ENCODE measurements at regions of chr14 and their contacts with region 1.

Region 1: GRCh38 chr14:89416002-89416995 is 734 bp downstream of the FOXN3 start:
- DNase-seq: peak; percentile 98
- H3K4me3 Mint-ChIP-seq: peak overlapping the region; percentile 88
- H3K27ac Mint-ChIP-seq: peak overlapping the region; percentile 84
- H3K4me1 Mint-ChIP-seq: peaks cover 48% of the 10 kb centered on the region
- H3K27me3 Mint-ChIP-seq: no peaks in the 10 kb centered on the region

Region 2: GRCh38 chr14:88632512-88632911 is 783.8 kb before region 1 on chr14:
- intact Hi-C with region 1: no loop called
- DNase-seq: no peak
- H3K4me3 Mint-ChIP-seq: no peak overlapping the region
- H3K27ac Mint-ChIP-seq: no peak overlapping the region
- H3K4me1 Mint-ChIP-seq: no peaks in the 10 kb centered on the region
- H3K27me3 Mint-ChIP-seq: no peaks in the 10 kb centered on the region

Region 3: GRCh38 chr14:89040460-89041259 is 375.6 kb before region 1 on chr14:
- intact Hi-C with region 1: loop called (anchors 1 kb)
- DNase-seq: peak; percentile 63
- H3K4me3 Mint-ChIP-seq: peak overlapping the region; percentile 56
- H3K27ac Mint-ChIP-seq: no peak overlapping the region
- H3K4me1 Mint-ChIP-seq: no peaks in the 10 kb centered on the region
- H3K27me3 Mint-ChIP-seq: peaks cover 18% of the 10 kb centered on the region

Region 4: DNA sequence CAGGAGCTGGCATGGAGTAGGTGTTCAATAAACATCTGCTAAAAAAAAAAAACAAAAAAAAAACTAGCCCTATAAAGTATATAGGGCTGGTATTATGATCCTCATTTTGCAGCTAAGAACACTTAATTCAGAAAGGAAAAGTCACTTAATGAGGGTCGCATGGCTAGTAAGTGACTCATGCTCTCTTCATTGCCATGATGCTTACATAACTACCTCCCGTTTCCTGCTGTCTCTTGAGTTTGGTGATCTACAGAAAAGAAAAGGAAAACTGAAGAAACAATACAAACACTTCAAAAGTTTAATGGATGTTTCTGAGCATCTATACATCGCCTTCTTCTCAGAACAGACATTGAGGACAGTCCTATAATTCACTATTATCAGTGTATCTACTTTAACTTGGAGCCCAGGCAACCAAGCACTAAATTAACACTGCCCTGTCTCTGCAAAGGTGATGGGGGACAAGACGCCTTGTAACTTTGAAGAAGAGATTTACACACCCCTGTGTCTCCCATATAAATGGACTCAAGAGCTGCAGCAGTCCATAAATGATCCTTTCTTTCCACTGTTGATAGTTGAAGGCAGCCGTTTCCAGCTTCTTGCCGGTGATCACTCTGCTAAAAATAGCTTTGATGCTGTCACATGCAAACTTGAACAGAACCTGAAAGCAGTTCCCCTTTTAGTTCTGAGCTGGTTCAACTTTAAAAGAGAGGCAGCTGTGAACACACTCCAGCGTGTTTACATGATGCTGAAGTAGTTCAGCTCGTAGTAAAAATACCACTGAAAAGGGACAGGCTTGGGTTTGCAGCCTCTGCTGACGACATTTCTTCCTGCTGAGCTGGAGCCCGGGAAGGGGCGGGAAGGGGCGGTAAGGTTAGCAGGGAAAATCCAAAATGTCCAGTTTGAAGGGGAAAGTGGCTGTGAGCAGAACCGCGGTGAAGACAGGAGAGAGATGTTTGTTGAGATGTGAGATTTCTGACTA is 112.6 kb before region 1 on chr14:
- intact Hi-C with region 1: loop called (anchors 1 kb)
- DNase-seq: peak; percentile 25
- H3K4me3 Mint-ChIP-seq: peak overlapping the region; percentile 76
- H3K27ac Mint-ChIP-seq: peak overlapping the region; percentile 87
- H3K4me1 Mint-ChIP-seq: peaks cover 57% of the 10 kb centered on the region
- H3K27me3 Mint-ChIP-seq: no peaks in the 10 kb centered on the region

Region 5: GRCh38 chr14:89336338-89336737 is 80.0 kb before region 1 on chr14:
- intact Hi-C with region 1: no loop called
- DNase-seq: no peak
- H3K4me3 Mint-ChIP-seq: no peak overlapping the region
- H3K27ac Mint-ChIP-seq: no peak overlapping the region
- H3K4me1 Mint-ChIP-seq: peaks cover 28% of the 10 kb centered on the region
- H3K27me3 Mint-ChIP-seq: no peaks in the 10 kb centered on the region

Region 6: GRCh38 chr14:89430391-89431236 is 14.3 kb after region 1 on chr14:
- intact Hi-C with region 1: loop called (anchors 1 kb)
- DNase-seq: peak; percentile 42
- H3K4me3 Mint-ChIP-seq: peak overlapping the region; percentile 79
- H3K27ac Mint-ChIP-seq: peak overlapping the region; percentile 85
- H3K4me1 Mint-ChIP-seq: peaks cover 56% of the 10 kb centered on the region
- H3K27me3 Mint-ChIP-seq: no peaks in the 10 kb centered on the region

Region 7: DNA sequence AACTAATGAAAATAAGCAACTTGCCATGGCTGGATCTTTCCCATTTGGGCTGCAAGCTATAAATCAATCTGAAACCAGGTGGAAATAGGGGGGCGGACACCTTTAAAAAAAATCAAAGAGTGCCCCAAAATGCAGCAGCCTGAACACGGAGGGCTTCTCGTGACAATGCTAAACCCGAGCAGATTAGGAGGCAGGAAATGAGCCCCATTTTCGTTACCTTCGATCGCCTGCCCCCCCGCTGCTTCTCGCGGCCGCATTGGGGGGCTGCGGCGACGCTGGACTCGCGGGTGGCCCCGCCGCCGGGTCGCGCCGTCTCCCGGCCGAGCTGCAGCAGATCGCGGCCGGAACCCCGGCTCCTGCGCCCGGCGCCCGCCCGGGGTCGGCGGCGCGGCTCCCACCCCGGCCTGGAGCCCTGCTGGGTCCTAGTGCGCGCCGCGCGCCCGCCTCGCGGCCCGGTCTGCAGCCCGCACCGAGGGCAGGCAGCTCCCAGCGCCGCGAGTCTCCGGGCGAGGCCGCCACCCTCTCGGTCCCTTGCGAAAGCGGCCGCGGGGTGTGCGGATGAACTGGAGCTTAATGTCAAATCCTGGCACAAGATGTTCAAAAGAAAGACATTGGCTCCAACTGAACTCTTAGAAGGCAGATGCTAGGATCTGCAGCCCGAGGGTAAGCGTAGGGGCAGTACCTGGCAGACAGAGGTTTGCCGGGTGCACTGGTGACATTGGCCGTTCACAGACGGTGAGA is 202.7 kb after region 1 on chr14:
- intact Hi-C with region 1: loop called (anchors 1 kb)
- DNase-seq: peak; percentile 69
- H3K4me3 Mint-ChIP-seq: peak overlapping the region; percentile 95
- H3K27ac Mint-ChIP-seq: peak overlapping the region; percentile 99
- H3K4me1 Mint-ChIP-seq: peaks cover 72% of the 10 kb centered on the region
- H3K27me3 Mint-ChIP-seq: no peaks in the 10 kb centered on the region

Region 8: DNA sequence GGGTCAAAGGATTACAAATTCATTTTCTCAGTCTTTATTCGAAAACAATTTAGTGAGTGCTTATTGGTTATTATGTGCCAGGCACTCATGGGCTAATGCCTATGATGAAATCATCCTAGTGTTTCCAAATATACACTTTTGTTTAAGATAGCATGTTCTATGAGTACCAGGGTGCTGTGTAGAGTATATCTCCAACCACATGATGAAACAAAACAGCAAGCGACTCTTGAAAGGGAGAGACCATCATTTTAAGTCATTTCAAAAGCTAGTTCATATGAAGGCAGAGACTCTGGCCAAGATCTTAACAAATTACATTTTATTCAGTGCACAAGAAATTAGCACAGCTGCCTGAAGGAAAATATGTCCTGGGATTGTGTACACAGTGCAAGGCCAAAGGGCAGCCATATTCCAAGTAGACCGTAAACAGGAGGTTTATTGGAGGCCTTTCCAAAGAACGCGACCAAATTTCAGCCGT is 334.0 kb after region 1 on chr14:
- intact Hi-C with region 1: loop called (anchors 2 kb)
- DNase-seq: no peak
- H3K4me3 Mint-ChIP-seq: no peak overlapping the region
- H3K27ac Mint-ChIP-seq: no peak overlapping the region
- H3K4me1 Mint-ChIP-seq: peaks cover 23% of the 10 kb centered on the region
- H3K27me3 Mint-ChIP-seq: no peaks in the 10 kb centered on the region

Region 9: DNA sequence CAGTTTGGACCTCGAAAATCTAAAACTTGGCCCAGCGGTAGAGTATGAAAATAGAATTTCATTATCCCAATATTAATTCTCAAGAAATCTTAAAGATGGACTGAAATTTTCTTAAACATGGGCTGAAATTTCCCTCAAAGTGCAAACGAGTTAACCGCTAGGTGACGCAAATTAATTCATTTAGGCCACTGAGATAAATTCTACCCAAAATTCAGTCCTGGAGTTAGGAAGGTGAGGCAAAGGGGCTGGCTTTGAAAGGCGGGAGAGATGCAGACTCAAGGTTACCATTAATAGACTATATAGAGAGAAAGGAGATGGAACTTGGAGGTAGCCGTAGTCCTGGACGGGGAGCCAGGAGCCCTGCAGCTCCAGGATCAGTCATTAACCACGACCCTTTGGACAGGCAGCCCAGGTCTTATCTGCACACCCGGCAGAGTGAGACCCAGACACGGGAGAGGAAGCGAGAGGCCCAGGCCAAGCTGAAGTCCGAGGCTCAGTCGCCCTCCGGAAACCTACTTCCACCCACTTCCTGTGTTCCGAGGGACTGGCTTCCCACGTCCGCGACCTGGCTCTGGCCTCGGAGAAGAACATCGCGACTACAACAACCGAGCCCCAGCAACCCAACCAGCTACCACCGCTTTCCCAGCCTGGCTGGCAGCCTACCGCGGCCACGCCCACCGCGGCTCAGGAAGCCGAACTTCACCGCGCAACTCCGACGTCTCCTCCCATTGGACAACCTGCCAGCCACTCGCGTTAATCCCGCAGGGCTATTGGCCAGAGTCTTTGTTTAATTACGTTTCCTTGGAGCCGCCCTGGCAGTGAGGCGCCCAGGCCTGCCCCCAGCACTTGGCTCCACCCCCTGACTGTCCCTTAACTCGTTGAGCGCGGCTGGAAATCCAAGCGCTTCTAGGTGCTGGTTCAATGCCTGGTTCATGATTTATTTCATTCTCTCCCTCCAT is 538.0 kb after region 1 on chr14 and contains the start of gene EFCAB11:
- intact Hi-C with region 1: loop called (anchors 1 kb)
- DNase-seq: peak; percentile 95
- H3K4me3 Mint-ChIP-seq: peak within 1 kb of the TSS; percentile 95
- H3K27ac Mint-ChIP-seq: peak within 1 kb of the TSS; percentile 93
- H3K4me1 Mint-ChIP-seq: peaks cover 58% of the 10 kb centered on the region
- H3K27me3 Mint-ChIP-seq: no peaks in the 10 kb centered on the region
- total RNA-seq, gene EFCAB11: 6.0 and 8.2 TPM in 2 replicates

Measured in activated T-helper 1 cell treated with anti-CD3 and anti-CD28 coated beads, Interleukin-12 subunit alpha, Interleukin-12 subunit beta, Interleukin-2, Interleukin-4 antibody, amounts not matched to agents 30 ng/mL and 10 ng/mL and 1 ng/mL, durations not matched to agents 14 hours and 24 hours and 36 hours (primary cell).